ENCODE measurements at regions of chr2 and their contacts with region 1.

Region 1: GRCh38 chr2:135709992-135710391 is 31.7 kb upstream of the UBXN4 start:
- DNase-seq: no peak
- H3K4me3 ChIP-seq: no peak overlapping the region
- CTCF ChIP-seq: peak; percentile 91

Region 2: GRCh38 chr2:134988994-134989605 is 720.9 kb before region 1 on chr2:
- CTCF ChIA-PET with region 1: interaction called, 56 read pairs
- POLR2A ChIA-PET with region 1: no interaction called
- DNase-seq: no peak
- H3K4me3 ChIP-seq: no peak overlapping the region
- CTCF ChIP-seq: peak; percentile 9

Region 3: GRCh38 chr2:135473567-135473966 is 236.4 kb before region 1 on chr2:
- CTCF ChIA-PET with region 1: interaction called, 43 read pairs
- POLR2A ChIA-PET with region 1: no interaction called
- DNase-seq: no peak
- H3K4me3 ChIP-seq: no peak overlapping the region
- CTCF ChIP-seq: peak; percentile 33

Region 4: DNA sequence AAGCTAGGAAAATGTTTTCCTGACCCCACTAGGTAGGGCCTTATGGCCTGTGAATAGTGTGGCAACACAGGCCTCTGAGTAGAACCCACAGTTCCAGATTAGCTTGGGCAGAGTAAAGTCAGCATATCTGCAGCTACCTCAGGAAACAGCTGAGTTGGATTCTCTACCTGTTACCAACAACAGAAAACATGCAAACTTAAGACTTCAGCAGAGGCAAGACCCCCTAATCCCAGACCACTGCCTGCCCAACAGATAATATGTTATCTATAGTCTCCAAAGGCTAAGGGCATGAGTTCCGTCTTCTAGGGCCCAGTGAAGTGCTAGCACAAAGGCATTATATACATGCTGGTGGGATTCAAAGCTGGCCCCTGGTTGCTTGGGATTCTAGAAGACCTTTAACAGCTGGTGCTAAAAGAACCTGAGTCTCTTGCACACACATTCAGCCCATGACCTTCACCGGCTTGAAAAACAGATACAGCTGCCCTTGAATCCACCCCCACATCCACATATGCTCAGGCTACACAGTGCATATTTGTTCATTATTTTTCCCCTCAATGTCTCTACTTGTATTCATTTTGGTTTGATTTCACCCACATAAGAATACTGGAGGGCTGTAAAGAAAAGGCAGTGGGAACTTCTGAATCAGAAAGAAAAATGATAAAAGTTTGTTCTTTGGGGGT is 18.2 kb after region 1 on chr2:
- CTCF ChIA-PET with region 1: interaction called, 13 read pairs
- POLR2A ChIA-PET with region 1: no interaction called
- DNase-seq: no peak
- H3K4me3 ChIP-seq: no peak overlapping the region
- CTCF ChIP-seq: no peak

Region 5: GRCh38 chr2:135741395-135742324 is 31.7 kb after region 1 on chr2 and contains the start of gene UBXN4:
- CTCF ChIA-PET with region 1: interaction called, 10 read pairs
- POLR2A ChIA-PET with region 1: no interaction called
- DNase-seq: peak; percentile 94
- H3K4me3 ChIP-seq: peak within 1 kb of the TSS; percentile 90
- CTCF ChIP-seq: peak; percentile 43

Region 6: GRCh38 chr2:136117909-136118818 is 408.2 kb after region 1 on chr2 and contains the start of gene CXCR4:
- CTCF ChIA-PET with region 1: no interaction called
- POLR2A ChIA-PET with region 1: no interaction called
- DNase-seq: no peak
- H3K4me3 ChIP-seq: peak within 1 kb of the TSS; percentile 36; the same call in 1 of the 2 replicates
- CTCF ChIP-seq: no peak

Measured in AG04449 (cell line).